Caco-2 (cell line): ENCODE measurements at regions of chr14 and their contacts with region 1.

Region 1: DNA sequence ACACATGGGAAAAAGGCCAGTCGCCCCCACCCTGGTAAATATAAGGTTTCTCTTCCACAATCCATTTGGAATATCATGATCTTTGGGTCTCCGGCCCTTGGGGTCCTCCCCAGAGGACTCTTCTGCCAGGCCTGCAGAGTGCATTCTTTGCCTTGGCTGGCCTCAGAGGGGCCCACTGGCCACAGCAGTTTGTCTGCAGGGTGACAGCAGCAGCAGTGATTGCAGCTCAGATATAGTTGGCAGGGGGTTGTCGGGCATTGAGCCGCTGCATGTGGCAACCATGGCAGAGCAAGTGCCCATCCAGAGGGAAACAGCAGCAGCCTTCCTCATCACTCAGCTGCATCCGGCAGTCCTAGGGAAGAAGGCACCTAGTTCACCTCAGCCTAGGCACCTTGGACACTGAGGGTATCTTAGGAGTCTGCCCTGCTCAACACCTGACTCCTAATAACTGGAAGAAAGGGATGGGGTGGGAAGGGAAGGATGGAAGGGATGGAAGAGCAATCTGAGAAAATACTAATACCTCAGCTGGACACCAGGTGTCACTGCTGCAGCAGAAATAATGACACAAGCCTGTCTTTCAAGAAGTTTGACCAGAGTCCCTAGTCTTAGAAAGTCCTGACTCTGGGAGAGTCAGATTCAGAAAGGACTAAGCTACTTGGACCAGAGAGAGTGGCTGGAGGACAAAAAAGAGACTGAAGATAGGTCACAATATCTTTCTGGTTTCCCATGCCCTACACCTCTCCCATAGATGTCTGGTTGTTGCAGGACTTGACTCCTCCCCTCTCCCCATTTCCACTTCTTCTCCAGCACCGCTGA is 8.9 kb downstream of the AJUBA start:
- DNase-seq: peak; percentile 58 to 76
- H3K4me3 ChIP-seq: no peak overlapping the region
- H3K4me3 Mint-ChIP-seq: peak overlapping the region; percentile 27
- H3K27ac Mint-ChIP-seq: peak overlapping the region; percentile 84
- H3K4me1 ChIP-seq: peaks cover 49% of the 10 kb centered on the region
- H3K4me1 Mint-ChIP-seq: peaks cover 45% of the 10 kb centered on the region
- H3K27me3 ChIP-seq: no peaks in the 10 kb centered on the region
- H3K27me3 Mint-ChIP-seq: no peaks in the 10 kb centered on the region
- CTCF ChIP-seq: peak; percentile 70 to 71

Region 2: GRCh38 chr14:22898372-22899090 is 74.9 kb before region 1 on chr14:
- CTCF ChIA-PET with region 1: no interaction called
- POLR2A ChIA-PET with region 1: no interaction called
- intact Hi-C with region 1: no loop called
- DNase-seq: no peak
- H3K4me3 ChIP-seq: no peak overlapping the region
- H3K4me3 Mint-ChIP-seq: no peak overlapping the region
- H3K27ac Mint-ChIP-seq: no peak overlapping the region
- H3K4me1 ChIP-seq: 0 out of 2 replicates have a peak, but pooled peaks cover 7% of the 10 kb centered on the region
- H3K4me1 Mint-ChIP-seq: no peaks in the 10 kb centered on the region
- H3K27me3 ChIP-seq: no peaks in the 10 kb centered on the region
- H3K27me3 Mint-ChIP-seq: no peaks in the 10 kb centered on the region
- CTCF ChIP-seq: no peak

Region 3: DNA sequence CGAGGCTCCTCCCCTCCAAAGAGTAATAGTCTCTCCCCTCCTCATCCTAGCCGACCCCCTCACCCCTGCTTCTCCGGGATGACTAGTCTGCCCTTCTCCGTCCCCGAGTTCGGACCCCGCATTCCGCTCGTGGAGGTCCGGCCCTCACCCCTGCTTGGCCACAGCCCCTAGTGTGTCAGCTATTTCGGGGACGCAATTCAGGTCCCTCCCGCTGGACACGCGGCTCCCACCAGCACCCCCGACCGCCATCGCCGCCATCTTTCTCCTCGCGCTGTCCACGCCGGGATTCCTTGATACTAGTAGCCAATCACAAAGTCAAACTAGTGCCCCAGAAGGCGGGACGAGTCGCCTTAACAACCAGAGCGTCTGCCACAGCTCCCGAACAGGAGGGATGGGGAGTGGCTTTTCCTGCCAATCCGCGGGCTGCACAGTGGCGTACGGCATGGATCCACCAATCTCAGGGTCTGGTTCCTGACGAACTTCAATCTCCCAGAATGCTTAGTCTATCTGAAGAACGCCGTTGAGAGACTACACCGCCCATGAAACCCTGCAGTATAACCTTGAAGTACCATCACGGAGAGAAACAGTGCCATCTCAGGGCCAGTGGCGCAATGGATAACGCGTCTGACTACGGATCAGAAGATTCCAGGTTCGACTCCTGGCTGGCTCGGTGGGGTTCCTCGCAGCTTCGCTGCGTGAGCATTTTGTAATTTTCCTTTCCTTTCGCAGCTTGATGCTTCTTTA is 44.1 kb before region 1 on chr14 and contains the start of gene PRMT5:
- CTCF ChIA-PET with region 1: interaction called, 12 read pairs
- POLR2A ChIA-PET with region 1: interaction called, 5 read pairs
- intact Hi-C with region 1: loop called (anchors 2 kb)
- DNase-seq: peak; percentile 98 to 100
- H3K4me3 ChIP-seq: peak within 1 kb of the TSS; percentile 89
- H3K4me3 Mint-ChIP-seq: no peak within 1 kb of the TSS
- H3K27ac Mint-ChIP-seq: no peak within 1 kb of the TSS
- H3K4me1 ChIP-seq: peaks cover 14% of the 10 kb centered on the region; the same call in 1 of the 2 replicates
- H3K4me1 Mint-ChIP-seq: peaks cover 26% of the 10 kb centered on the region
- H3K27me3 ChIP-seq: no peaks in the 10 kb centered on the region
- H3K27me3 Mint-ChIP-seq: no peaks in the 10 kb centered on the region
- CTCF ChIP-seq: no peak
- total RNA-seq, gene PRMT5: 107 and 111 TPM in 2 replicates

Region 4: DNA sequence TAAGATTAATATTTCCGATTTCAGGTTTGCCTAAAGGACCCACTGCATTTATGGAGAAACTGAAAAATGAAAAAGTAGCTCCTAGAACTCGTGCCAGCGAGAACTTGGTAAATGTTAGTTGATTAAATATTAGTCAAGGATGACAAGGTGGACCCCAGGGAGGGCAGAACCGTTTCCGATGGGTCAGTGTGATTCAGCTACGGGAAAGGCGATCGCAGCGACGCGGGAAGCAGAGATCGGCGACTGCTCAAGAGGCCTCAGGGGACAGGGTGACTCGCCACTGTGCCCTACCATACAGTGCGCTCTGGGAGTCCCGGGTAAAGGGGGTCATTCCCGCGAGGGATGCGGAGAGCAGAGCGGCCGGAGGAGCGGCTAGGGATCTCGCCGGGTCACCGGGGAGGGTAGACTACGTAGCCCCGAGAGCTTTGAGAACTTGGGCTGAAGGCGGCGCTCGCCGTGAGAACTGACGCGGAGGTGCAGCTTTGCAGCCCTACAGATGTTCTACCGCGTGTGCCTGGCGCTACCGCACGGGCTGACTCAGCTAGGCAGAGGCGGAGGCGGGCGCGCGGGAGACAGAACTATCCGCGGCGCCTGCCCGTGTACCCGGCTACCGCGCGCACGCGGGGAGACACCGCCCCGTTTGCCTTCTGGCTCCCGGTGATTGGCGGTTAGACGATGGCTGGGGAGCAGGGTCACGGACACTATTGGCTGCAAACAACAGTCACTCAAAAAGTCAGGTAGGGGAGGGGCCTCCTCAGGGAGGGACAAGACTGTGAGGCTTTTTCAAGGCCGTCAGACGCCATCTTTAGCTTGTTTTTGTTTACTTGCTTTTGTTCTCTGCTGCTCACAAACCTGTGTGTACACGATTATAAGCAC is 33.4 kb after region 1 on chr14:
- CTCF ChIA-PET with region 1: interaction called, 6 read pairs
- POLR2A ChIA-PET with region 1: interaction called, 25 read pairs
- intact Hi-C with region 1: no loop called
- DNase-seq: peak; percentile 97
- H3K4me3 ChIP-seq: peak overlapping the region; percentile 63
- H3K4me3 Mint-ChIP-seq: peak overlapping the region; percentile 100
- H3K27ac Mint-ChIP-seq: peak overlapping the region; percentile 99
- H3K4me1 ChIP-seq: peaks cover 14% of the 10 kb centered on the region
- H3K4me1 Mint-ChIP-seq: peaks cover 15% of the 10 kb centered on the region
- H3K27me3 ChIP-seq: no peaks in the 10 kb centered on the region
- H3K27me3 Mint-ChIP-seq: no peaks in the 10 kb centered on the region
- CTCF ChIP-seq: peak; percentile 13 to 44

Region 5: GRCh38 chr14:23068476-23069412 is 95.3 kb after region 1 on chr14:
- CTCF ChIA-PET with region 1: interaction called, 7 read pairs
- POLR2A ChIA-PET with region 1: interaction called, 14 read pairs
- intact Hi-C with region 1: no loop called
- DNase-seq: peak; percentile 89
- H3K4me3 ChIP-seq: no peak overlapping the region
- H3K4me3 Mint-ChIP-seq: peak overlapping the region; percentile 42
- H3K27ac Mint-ChIP-seq: peak overlapping the region; percentile 60
- H3K4me1 ChIP-seq: peaks cover 13% of the 10 kb centered on the region
- H3K4me1 Mint-ChIP-seq: peaks cover 32% of the 10 kb centered on the region
- H3K27me3 ChIP-seq: no peaks in the 10 kb centered on the region
- H3K27me3 Mint-ChIP-seq: no peaks in the 10 kb centered on the region
- CTCF ChIP-seq: peak; percentile 95 to 98